AG04450 (cell line): ENCODE measurements at regions of chrX and their contacts with region 1.

Region 1: DNA sequence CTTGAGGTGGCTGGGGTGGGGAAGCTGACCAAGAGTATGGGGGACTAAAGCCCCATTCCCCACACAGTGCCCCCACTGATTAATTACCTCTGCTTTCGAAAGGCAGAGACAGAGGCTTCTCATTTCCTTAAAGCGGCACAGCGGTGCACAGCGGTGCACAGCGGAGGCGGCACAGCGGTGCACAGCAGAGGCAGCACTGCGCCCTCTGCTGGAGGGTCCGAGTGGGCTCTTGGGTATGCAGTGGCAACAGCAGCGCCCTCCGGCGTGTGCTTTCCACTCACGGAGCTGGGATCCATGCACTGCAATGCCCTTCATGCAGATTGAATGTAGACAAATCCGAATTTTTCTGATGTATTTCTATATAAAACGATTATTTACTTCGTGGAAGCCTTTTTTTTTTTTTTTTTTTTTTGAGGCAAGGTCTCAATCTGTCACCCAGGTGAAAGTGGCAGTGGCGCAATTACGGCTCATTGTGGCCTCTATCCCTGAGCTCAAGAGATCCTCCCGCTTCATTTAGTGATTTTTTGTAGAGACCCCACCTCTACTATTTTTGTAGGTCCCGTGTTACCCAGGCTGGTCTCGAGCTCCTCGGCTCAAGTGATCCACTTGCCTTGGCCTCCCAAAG is 19.7 kb upstream of the PRPS2 start:
- DNase-seq: no peak
- H3K4me3 ChIP-seq: no peak overlapping the region
- H3K27ac ChIP-seq: no peak overlapping the region
- H3K27me3 ChIP-seq: no peaks in the 10 kb centered on the region
- CTCF ChIP-seq: peak; percentile 71

Region 2: DNA sequence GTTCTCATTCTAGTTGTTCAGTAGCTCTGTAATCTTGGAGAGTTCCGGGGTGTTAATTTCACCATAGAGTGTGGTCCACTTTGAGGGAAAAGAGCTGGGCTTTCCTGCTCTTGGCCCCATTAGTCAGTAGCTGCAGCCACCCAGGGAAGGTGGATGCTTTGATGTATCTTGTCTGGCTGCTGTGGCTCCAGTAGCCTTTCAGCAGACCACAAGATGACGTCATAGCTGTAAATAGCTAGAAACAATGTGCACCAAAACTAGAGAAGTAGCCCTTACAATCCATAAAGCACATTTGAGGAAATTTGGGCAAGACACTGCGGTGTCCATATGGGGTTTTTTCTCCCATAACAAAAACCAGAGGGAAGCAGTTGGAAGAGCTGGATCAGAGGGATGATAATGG is 13.3 kb before region 1 on chrX:
- CTCF ChIA-PET with region 1: interaction called, 14 read pairs
- POLR2A ChIA-PET with region 1: no interaction called
- DNase-seq: no peak
- H3K4me3 ChIP-seq: no peak overlapping the region
- H3K27ac ChIP-seq: no peak overlapping the region
- H3K27me3 ChIP-seq: no peaks in the 10 kb centered on the region
- CTCF ChIP-seq: no peak

Region 3: DNA sequence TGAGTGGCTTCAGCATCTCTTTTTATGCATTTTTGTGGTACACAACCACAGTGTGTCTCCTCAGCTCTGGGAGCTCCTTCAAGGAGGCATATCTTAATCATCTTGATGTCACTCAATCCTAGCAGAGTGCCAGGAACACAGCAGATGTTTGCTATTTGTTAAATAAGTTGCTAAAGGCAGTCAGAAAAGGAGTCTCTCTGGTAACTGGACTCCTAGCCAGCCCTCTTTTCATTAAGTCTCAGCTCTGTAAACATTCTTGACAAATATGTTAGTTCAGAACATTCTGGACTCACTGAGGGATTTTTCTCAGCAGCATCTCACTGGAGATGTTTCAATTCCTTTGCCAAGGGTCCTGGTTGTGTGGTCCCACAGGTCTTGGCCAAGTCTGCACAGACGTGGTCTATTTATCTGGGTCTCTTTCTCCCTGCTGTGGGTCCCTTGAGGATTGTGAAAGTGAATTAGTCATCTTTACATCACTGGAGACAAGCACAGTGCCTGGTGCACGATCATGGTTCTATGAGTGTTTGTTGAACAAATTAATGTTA is 293.1 kb after region 1 on chrX:
- CTCF ChIA-PET with region 1: no interaction called
- POLR2A ChIA-PET with region 1: no interaction called
- DNase-seq: no peak
- H3K4me3 ChIP-seq: no peak overlapping the region
- H3K27ac ChIP-seq: peak overlapping the region; percentile 31
- H3K27me3 ChIP-seq: no peaks in the 10 kb centered on the region
- CTCF ChIP-seq: no peak